ENCODE measurements at regions of chr20 and their contacts with region 1.

Region 1: GRCh38 chr20:561437-562231 is 18.0 kb upstream of the CSNK2A1 start:
- DNase-seq: peak; percentile 79
- H3K4me3 Mint-ChIP-seq: no peak overlapping the region
- H3K27ac Mint-ChIP-seq: no peak overlapping the region
- H3K4me1 Mint-ChIP-seq: no peaks in the 10 kb centered on the region
- H3K27me3 Mint-ChIP-seq: peaks cover 18% of the 10 kb centered on the region
- CTCF ChIP-seq: peak; percentile 98

Region 2: DNA sequence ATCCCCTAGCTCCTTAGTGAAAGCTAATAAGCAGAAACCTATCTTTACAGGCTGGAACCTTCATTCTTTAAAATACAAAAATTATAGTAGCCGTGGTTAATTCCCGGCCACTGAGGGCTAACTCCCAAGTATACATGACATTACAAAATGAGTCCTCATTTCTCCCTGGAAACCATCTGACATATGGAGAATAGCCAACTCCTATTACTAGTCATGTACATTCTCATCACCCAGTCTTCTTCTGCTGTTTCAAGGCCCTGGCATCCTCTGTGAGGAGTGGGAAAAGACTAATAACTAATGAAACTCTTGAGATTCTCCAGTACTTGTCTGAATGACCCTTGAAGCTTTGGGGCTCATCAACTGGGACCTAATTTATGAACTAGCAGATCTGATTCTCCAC is 48.2 kb before region 1 on chr20:
- CTCF ChIA-PET with region 1: no interaction called
- POLR2A ChIA-PET with region 1: no interaction called
- intact Hi-C with region 1: no loop called
- DNase-seq: no peak
- H3K4me3 Mint-ChIP-seq: no peak overlapping the region
- H3K27ac Mint-ChIP-seq: no peak overlapping the region
- H3K4me1 Mint-ChIP-seq: peaks cover 30% of the 10 kb centered on the region
- H3K27me3 Mint-ChIP-seq: no peaks in the 10 kb centered on the region
- CTCF ChIP-seq: no peak

Region 3: GRCh38 chr20:549722-550496 is 11.7 kb before region 1 on chr20:
- CTCF ChIA-PET with region 1: interaction called, 34 read pairs
- POLR2A ChIA-PET with region 1: no interaction called
- intact Hi-C with region 1: no loop called
- DNase-seq: no peak
- H3K4me3 Mint-ChIP-seq: no peak overlapping the region
- H3K27ac Mint-ChIP-seq: no peak overlapping the region
- H3K4me1 Mint-ChIP-seq: peaks cover 4% of the 10 kb centered on the region
- H3K27me3 Mint-ChIP-seq: peaks cover 32% of the 10 kb centered on the region
- CTCF ChIP-seq: no peak

Region 4: DNA sequence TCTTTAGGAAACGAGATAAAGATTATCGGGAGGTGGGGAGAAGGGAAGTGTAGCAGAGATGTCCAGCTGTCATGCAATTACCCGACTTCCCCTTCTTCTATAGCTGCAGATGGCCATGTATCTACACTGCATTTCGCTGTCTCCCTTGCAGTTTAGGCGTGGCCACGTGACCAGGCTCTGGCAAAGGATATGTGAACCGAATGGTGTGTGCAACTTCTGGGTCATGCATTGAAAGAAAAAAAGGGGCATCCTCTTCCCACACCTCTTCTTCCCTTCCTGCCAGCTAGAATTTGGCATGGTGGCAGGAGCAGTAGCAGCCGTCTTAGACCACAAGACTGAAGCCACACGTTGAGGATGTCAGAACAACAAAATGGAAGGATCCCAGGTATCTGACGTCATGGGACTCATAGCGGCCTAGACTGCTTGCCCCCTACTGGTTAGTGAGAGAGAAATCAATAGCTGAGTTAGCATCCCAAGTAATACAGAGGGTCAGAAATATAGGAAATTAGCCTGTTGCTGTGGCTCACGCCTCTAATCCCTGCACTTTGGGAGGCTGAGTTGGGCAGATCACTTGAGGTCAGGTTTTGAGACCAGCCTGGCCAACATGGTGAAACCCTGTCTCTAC is 15.6 kb after region 1 on chr20:
- CTCF ChIA-PET with region 1: interaction called, 37 read pairs
- POLR2A ChIA-PET with region 1: interaction called, 4 read pairs
- intact Hi-C with region 1: no loop called
- DNase-seq: peak; percentile 28
- H3K4me3 Mint-ChIP-seq: no peak overlapping the region
- H3K27ac Mint-ChIP-seq: no peak overlapping the region
- H3K4me1 Mint-ChIP-seq: peaks cover 5% of the 10 kb centered on the region
- H3K27me3 Mint-ChIP-seq: peaks cover 31% of the 10 kb centered on the region
- CTCF ChIP-seq: no peak

Region 5: GRCh38 chr20:667391-667964 is 105.8 kb after region 1 on chr20:
- CTCF ChIA-PET with region 1: interaction called, 23 read pairs
- POLR2A ChIA-PET with region 1: no interaction called
- intact Hi-C with region 1: loop called (anchors 1 kb)
- DNase-seq: peak; percentile 55
- H3K4me3 Mint-ChIP-seq: no peak overlapping the region
- H3K27ac Mint-ChIP-seq: no peak overlapping the region
- H3K4me1 Mint-ChIP-seq: no peaks in the 10 kb centered on the region
- H3K27me3 Mint-ChIP-seq: peaks cover 41% of the 10 kb centered on the region
- CTCF ChIP-seq: peak; percentile 86

Region 6: DNA sequence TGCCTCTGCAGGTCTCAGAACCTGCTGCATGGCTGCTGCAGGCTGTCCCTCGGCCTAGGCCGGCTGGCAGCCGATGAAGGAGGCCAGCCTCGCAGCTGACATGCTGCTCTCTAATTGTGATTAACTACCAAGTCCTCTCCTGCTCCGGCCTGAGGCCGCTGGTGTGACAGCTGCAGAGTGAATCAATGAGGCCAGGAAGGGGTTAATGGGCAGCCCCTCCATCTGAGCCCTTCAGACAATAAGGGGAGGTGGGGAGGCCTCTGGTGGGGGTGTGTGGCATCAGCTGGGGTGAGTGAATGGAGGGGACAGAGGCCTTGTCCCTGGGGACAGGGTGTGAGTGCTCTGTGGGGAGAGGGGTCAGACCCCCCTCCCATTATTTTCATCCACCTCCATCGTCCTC is 172.2 kb after region 1 on chr20:
- CTCF ChIA-PET with region 1: interaction called, 169 read pairs
- POLR2A ChIA-PET with region 1: interaction called, 7 read pairs
- intact Hi-C with region 1: loop called (anchors 1 kb)
- DNase-seq: no peak
- H3K4me3 Mint-ChIP-seq: no peak overlapping the region
- H3K27ac Mint-ChIP-seq: no peak overlapping the region
- H3K4me1 Mint-ChIP-seq: no peaks in the 10 kb centered on the region
- H3K27me3 Mint-ChIP-seq: peaks cover 38% of the 10 kb centered on the region
- CTCF ChIP-seq: no peak

Measured in MCF 10A (cell line).